ENCODE measurements at regions of chr19 and their contacts with region 1.

Region 1: DNA sequence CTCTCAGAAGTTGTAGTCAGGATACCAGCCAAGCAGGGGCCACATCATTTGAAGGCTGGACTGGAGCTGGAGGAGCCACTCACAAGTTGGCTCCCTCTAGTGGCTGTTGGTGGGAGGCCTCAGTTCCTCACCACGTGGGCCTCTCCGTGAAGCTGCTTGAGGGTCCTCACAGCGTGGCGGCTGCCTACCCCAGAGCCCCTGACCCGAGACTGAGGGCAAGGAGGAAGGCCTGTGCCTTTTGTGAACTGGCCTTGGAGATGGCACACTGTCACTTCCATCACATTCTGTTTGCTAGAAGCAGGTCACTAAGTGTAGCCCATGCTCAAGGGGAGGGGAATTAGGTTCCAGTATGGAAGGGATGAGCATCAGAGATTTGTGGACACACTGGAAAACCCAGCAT is 14.6 kb downstream of the GNA11 start:
- DNase-seq: peak; percentile 51 to 70 (median 68)
- H3K4me3 ChIP-seq: no peak overlapping the region
- H3K4me3 Mint-ChIP-seq: no peak overlapping the region
- H3K27ac ChIP-seq: no peak overlapping the region
- H3K27ac Mint-ChIP-seq: peak overlapping the region in 1 of 7 donors; percentile 78
- H3K4me1 ChIP-seq: peaks cover 6 to 7% of the 10 kb centered on the region in 2 donors
- H3K4me1 Mint-ChIP-seq: peaks cover 6% of the 10 kb centered on the region
- H3K27me3 ChIP-seq: no peaks in the 10 kb centered on the region
- H3K27me3 Mint-ChIP-seq: peaks cover 3 to 16% (median 6%) of the 10 kb centered on the region in 3 donors
- CTCF ChIP-seq: peak; percentile 94

Region 2: GRCh38 chr19:2950286-2951124 is 158.3 kb before region 1 on chr19:
- intact Hi-C with region 1: loop called in 1 of 2 experiments (anchors 10 kb)
- DNase-seq: peak; percentile 99
- H3K4me3 ChIP-seq: peak overlapping the region; percentile 55 to 90 (median 62)
- H3K4me3 Mint-ChIP-seq: peak overlapping the region; percentile 95 to 97
- H3K27ac ChIP-seq: peak overlapping the region; percentile 90 to 94
- H3K27ac Mint-ChIP-seq: peak overlapping the region; percentile 97 to 99 (median 99)
- H3K4me1 ChIP-seq: peaks cover 16 to 19% of the 10 kb centered on the region in 2 donors
- H3K4me1 Mint-ChIP-seq: peaks cover 14% of the 10 kb centered on the region
- H3K27me3 ChIP-seq: no peaks in the 10 kb centered on the region
- H3K27me3 Mint-ChIP-seq: peaks cover 0 to 5% (median 0%) of the 10 kb centered on the region in 3 donors
- CTCF ChIP-seq: no peak

Measured in CD14-positive monocyte (primary cell).